Activated CD4-positive, alpha-beta T cell treated with anti-CD3 and anti-CD28 coated beads, Interleukin-2, amount 10 ng/mL, durations not matched to agents 24 days and 14 days (primary cell): ENCODE measurements at regions of chr11 and their contacts with region 1.

Region 1: GRCh38 chr11:35144136-35144741 is 5.3 kb downstream of the CD44 start:
- DNase-seq: peak; percentile 91
- H3K4me3 Mint-ChIP-seq: peak overlapping the region; percentile 87
- H3K27ac Mint-ChIP-seq: peak overlapping the region; percentile 96
- H3K4me1 Mint-ChIP-seq: peaks cover 71% of the 10 kb centered on the region
- H3K27me3 Mint-ChIP-seq: no peaks in the 10 kb centered on the region

Region 2: DNA sequence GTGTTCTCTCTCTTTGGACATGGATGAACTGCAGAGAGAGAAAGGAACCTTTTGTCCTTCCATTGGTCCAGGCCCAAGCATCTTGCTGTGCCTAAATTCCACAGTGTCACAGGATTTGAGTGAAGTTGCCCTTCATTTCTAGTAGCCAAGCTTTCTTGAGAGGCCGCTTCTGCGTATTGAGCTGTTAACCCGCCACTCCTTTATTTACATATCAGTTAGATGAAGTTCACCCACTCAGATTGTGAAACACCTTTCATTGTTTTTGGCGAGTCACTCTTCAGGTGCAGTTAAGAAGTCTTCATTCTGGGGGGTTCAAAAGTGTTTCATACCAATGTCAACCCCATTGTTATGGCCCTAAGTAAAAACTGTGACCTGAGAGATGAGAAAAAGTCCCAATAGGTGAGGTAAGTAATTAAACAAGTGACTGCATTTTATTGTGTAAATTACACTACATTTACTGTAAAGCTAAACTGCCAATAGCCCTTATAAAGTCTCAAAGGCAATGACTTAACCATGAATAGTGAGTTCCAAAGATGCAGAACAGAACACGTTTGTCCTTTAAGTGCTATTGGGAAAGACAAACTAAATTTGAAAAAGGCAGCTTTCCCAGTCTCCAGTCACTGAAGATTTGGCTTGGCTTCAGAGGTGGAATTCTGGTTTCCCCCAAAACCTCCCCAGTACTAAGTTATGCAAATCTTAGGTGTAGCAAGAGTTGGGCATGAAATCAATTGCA is 289.1 kb before region 1 on chr11:
- intact Hi-C with region 1: no loop called
- DNase-seq: no peak
- H3K4me3 Mint-ChIP-seq: no peak overlapping the region
- H3K27ac Mint-ChIP-seq: no peak overlapping the region
- H3K4me1 Mint-ChIP-seq: no peaks in the 10 kb centered on the region
- H3K27me3 Mint-ChIP-seq: peaks cover 20% of the 10 kb centered on the region

Region 3: DNA sequence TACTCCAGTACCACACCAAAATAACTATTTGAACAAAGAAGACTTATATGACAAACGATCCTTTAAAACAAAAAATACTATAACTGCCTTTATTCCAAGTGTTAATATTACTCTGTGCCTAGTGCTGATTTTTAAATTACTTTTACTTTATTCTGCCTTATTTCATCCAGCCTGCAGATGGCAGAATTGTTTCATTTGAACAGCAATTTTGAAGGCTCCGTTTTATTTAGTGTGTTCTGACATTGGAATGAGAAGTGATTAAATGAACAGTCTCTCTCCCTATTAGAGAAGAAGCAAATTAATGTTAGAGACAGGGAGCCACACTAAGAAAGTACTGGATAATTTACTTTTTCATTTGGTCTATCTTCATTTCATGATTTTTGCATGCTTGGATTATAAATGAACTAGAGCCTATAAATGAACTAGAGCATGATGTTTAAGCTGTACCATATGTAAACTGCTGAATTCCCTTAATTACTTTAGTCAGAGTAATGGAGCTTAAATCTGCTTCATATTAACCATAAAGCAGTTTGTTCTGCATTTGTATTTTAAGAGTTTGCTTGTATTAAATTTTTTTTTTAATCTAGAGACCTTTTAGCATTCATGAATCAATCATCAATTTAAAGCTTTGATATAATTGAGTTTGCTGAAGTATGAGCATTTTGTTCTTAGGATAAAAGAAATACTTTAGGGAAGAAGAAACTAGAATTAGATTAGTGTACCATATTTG is 218.0 kb before region 1 on chr11:
- intact Hi-C with region 1: loop called (anchors 5 kb)
- DNase-seq: peak; percentile 77
- H3K4me3 Mint-ChIP-seq: no peak overlapping the region
- H3K27ac Mint-ChIP-seq: no peak overlapping the region
- H3K4me1 Mint-ChIP-seq: peaks cover 11% of the 10 kb centered on the region
- H3K27me3 Mint-ChIP-seq: no peaks in the 10 kb centered on the region

Region 4: GRCh38 chr11:35082321-35083182 is 61.7 kb before region 1 on chr11:
- intact Hi-C with region 1: loop called (anchors 1 kb)
- DNase-seq: peak; percentile 96
- H3K4me3 Mint-ChIP-seq: peak overlapping the region; percentile 73
- H3K27ac Mint-ChIP-seq: peak overlapping the region; percentile 86
- H3K4me1 Mint-ChIP-seq: peaks cover 78% of the 10 kb centered on the region
- H3K27me3 Mint-ChIP-seq: peaks cover 1% of the 10 kb centered on the region

Region 5: DNA sequence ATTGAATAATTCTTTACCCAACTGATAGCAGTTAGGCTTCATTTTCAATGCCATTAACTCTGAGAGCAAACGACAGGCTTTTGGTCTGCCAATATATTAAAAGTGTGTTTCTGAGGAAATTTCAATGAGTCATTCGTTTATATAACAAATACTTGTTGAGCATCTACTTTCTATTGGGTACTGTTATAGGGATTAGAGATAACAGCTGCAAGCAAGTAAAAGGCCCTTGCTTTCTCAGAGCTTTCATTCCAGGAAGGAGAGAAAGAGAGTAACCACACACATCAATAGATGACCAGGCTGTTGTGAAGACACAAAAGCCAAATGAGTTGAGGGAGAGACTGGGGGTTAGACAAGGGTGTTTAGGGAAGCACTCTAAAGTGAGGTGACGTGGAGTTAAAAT is 30.4 kb after region 1 on chr11:
- intact Hi-C with region 1: loop called (anchors 1 kb)
- DNase-seq: peak; percentile 69
- H3K4me3 Mint-ChIP-seq: peak overlapping the region; percentile 57
- H3K27ac Mint-ChIP-seq: peak overlapping the region; percentile 85
- H3K4me1 Mint-ChIP-seq: peaks cover 85% of the 10 kb centered on the region
- H3K27me3 Mint-ChIP-seq: no peaks in the 10 kb centered on the region

Region 6: GRCh38 chr11:35343033-35343598 is 198.9 kb after region 1 on chr11:
- intact Hi-C with region 1: loop called (anchors 1 kb)
- DNase-seq: peak; percentile 92
- H3K4me3 Mint-ChIP-seq: peak overlapping the region; percentile 68
- H3K27ac Mint-ChIP-seq: peak overlapping the region; percentile 89
- H3K4me1 Mint-ChIP-seq: peaks cover 37% of the 10 kb centered on the region
- H3K27me3 Mint-ChIP-seq: peaks cover 3% of the 10 kb centered on the region